Naive thymus-derived CD4-positive, alpha-beta T cell (primary cell): ENCODE measurements at regions of chr10 and their contacts with region 1.

Region 1: DNA sequence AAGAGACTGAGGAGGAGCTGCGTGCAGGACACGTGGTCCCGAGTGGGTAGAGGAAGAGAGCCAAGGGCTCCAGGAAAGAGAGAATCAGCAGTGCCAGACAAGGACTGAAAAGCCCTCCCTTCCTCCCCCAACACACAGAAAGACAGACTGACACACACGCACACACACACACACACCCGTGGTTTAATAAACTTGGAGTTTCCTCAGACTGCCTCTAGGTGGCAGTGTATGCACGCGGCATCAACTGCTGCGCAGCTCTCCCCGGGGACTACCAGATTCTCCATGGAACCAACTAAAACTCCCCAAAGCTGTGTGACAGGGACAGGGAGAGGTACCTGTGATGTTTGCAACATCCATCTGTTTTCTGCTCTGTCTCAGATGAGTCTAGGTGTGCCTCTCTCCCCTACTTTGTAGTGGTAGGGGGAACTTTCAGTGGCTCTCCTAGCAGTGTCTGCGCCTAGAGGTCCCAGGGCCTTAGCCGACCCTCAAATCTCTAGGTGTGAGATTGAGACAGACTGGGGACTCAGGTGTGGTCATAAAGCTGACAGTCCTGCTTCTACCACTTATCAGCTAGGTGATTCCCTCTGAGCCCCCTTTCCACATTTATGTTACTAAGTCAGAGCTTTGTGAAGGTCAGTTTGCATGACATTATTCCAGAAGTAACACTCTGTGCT is 9.3 kb upstream of the TSPAN14 start:
- DNase-seq: peak in 7 of 9 donors; percentile 60 to 83 (median 75)
- ATAC-seq: peak; percentile 86
- H3K4me3 ChIP-seq: no peak overlapping the region
- H3K4me3 Mint-ChIP-seq: peak overlapping the region in 9 of 10 donors; percentile 19 to 69 (median 39)
- H3K27ac ChIP-seq: no peak overlapping the region
- H3K27ac Mint-ChIP-seq: peak overlapping the region; percentile 29 to 90 (median 78)
- H3K4me1 ChIP-seq: peaks cover 0 to 39% of the 10 kb centered on the region in 2 donors
- H3K4me1 Mint-ChIP-seq: peaks cover 34 to 71% (median 55%) of the 10 kb centered on the region in 7 donors
- H3K27me3 ChIP-seq: no peaks in the 10 kb centered on the region
- H3K27me3 Mint-ChIP-seq: peaks cover 0 to 11% (median 0%) of the 10 kb centered on the region in 5 donors

Region 2: DNA sequence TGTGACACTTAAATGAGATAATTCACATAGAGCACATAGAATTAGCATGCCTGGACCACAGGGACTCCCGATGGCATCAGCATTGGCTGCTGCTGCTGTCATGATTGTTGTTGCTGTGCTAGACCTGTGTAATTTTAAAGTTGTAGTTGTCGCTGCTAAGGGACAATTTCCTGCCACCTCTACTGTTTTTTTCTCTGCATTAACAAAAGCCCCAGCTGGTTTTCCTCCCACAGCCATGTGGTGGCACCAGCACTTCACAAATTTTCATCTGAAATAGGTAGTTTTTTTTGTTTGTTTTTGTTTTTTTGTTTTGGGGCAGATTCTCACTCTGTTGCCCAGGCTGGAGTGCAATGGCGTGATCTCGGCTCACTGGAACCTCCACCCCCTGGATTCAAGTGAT is 61.8 kb before region 1 on chr10:
- CTCF ChIA-PET with region 1: interaction called, 6 read pairs
- POLR2A ChIA-PET with region 1: interaction called, 4 read pairs
- intact Hi-C with region 1: loop called (anchors 1 kb)
- DNase-seq: peak in 8 of 9 donors; percentile 34 to 79 (median 63)
- ATAC-seq: peak; percentile 65
- H3K4me3 ChIP-seq: no peak overlapping the region
- H3K4me3 Mint-ChIP-seq: peak overlapping the region in 5 of 10 donors; percentile 10 to 53 (median 45)
- H3K27ac ChIP-seq: no peak overlapping the region
- H3K27ac Mint-ChIP-seq: peak overlapping the region in 8 of 9 donors; percentile 14 to 85 (median 74)
- H3K4me1 ChIP-seq: peaks cover 0 to 16% of the 10 kb centered on the region in 2 donors
- H3K4me1 Mint-ChIP-seq: peaks cover 10 to 24% (median 19%) of the 10 kb centered on the region in 7 donors
- H3K27me3 ChIP-seq: no peaks in the 10 kb centered on the region
- H3K27me3 Mint-ChIP-seq: peaks cover 0 to 8% (median 0%) of the 10 kb centered on the region in 5 donors

Region 3: DNA sequence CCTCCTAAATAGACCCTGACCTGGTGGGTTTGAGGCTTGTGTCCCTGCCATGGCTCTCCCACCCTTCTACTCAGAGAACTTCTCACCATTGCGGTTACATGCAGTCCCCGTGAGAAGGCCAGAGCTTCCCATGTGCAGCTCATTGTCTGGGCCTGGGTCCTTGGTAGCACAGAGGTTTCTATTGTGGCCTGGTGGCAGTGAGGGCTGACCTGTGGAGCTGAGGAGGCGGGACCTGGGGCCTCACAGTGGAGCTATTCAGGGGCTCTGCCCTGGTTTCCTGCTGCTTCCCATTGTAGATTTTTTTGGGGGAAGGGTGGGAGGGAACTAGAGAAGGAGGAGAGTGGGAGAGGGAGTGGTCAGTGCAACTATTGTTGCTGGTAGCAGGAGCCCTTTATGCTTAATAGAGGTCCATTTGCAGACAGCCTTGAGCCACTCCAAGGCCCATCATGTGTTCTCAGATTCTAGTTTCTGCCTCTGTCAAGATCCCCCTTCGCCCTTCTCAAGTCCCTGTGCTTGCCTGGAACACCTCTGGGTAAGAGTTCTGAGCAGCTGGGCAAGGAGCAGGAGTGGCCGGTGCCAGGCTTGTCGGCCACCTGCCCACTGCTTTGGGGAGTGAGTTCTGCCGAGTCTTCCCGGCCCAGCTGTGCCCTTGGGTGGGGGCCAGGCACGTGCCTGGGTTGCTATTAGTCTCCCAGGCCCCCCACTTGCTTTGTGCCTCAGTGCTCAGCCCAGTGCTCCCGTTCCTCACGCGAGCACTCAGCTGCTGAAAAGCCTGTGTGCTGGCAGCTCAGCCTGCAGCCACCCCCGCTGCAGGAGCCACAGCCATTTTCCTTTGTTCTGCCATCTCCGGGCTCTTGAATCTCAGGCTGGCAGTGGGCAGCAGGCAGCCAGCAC is 20.0 kb after region 1 on chr10:
- CTCF ChIA-PET with region 1: interaction called, 63 read pairs
- POLR2A ChIA-PET with region 1: interaction called, 318 read pairs
- intact Hi-C with region 1: loop called in 1 of 2 experiments (anchors 1 kb)
- DNase-seq: peak in 2 of 9 donors; percentile 46 to 47
- ATAC-seq: peak; percentile 11
- H3K4me3 ChIP-seq: peak overlapping the region; percentile 57
- H3K4me3 Mint-ChIP-seq: peak overlapping the region; percentile 79 to 99 (median 88)
- H3K27ac ChIP-seq: peak overlapping the region; percentile 84
- H3K27ac Mint-ChIP-seq: peak overlapping the region; percentile 87 to 99 (median 98)
- H3K4me1 ChIP-seq: peaks cover 88 to 97% of the 10 kb centered on the region in 2 donors
- H3K4me1 Mint-ChIP-seq: peaks cover 75 to 100% (median 95%) of the 10 kb centered on the region in 7 donors
- H3K27me3 ChIP-seq: no peaks in the 10 kb centered on the region
- H3K27me3 Mint-ChIP-seq: no peaks in the 10 kb centered on the region

Region 4: GRCh38 chr10:80498833-80499741 is 54.3 kb after region 1 on chr10:
- CTCF ChIA-PET with region 1: interaction called, 839 read pairs
- POLR2A ChIA-PET with region 1: interaction called, 582 read pairs
- intact Hi-C with region 1: no loop called
- DNase-seq: peak in 2 of 9 donors; percentile 32 to 61
- ATAC-seq: peak; percentile 73
- H3K4me3 ChIP-seq: peak overlapping the region; percentile 33
- H3K4me3 Mint-ChIP-seq: peak overlapping the region; percentile 76 to 92 (median 82)
- H3K27ac ChIP-seq: peak overlapping the region; percentile 59
- H3K27ac Mint-ChIP-seq: peak overlapping the region; percentile 85 to 99 (median 90)
- H3K4me1 ChIP-seq: peaks cover 93 to 99% of the 10 kb centered on the region in 2 donors
- H3K4me1 Mint-ChIP-seq: peaks cover 89 to 100% (median 98%) of the 10 kb centered on the region in 7 donors
- H3K27me3 ChIP-seq: no peaks in the 10 kb centered on the region
- H3K27me3 Mint-ChIP-seq: no peaks in the 10 kb centered on the region

Region 5: GRCh38 chr10:80583685-80584084 is 138.9 kb after region 1 on chr10:
- CTCF ChIA-PET with region 1: interaction called, 5 read pairs
- POLR2A ChIA-PET with region 1: no interaction called
- intact Hi-C with region 1: loop called in 1 of 2 experiments (anchors 1 kb)
- DNase-seq: peak in 1 of 9 donors; percentile 23
- ATAC-seq: no peak
- H3K4me3 ChIP-seq: no peak overlapping the region
- H3K4me3 Mint-ChIP-seq: no peak overlapping the region
- H3K27ac ChIP-seq: no peak overlapping the region
- H3K27ac Mint-ChIP-seq: no peak overlapping the region
- H3K4me1 ChIP-seq: no peaks in the 10 kb centered on the region
- H3K4me1 Mint-ChIP-seq: peaks cover 0 to 10% (median 3%) of the 10 kb centered on the region in 7 donors
- H3K27me3 ChIP-seq: no peaks in the 10 kb centered on the region
- H3K27me3 Mint-ChIP-seq: peaks cover 0 to 13% (median 0%) of the 10 kb centered on the region in 5 donors

Region 6: DNA sequence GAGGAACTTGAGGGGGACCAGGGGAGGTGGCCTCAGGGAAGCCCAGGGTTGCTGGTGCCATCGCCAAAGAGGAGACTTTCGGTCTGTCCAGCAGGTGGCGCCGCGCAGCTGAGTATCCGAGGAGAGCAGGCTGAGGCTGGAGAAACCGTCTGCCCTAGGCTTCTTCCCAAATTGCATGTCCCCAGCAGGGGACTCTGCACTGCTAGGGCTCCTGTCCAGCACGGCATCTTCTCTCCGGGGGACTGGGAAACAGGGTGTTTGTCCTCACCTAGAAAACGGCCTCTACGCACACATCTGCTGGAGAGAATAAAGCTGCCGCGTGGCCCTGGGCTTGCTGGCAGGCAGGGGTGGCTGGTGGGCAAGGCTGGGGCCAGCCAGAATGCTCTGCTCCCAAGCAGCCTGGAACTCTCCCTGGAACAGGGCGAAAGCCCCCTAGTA is 254.8 kb after region 1 on chr10:
- CTCF ChIA-PET with region 1: no interaction called
- POLR2A ChIA-PET with region 1: no interaction called
- intact Hi-C with region 1: loop called (anchors 2 to 10 kb)
- DNase-seq: peak; percentile 14 to 68 (median 54)
- ATAC-seq: peak; percentile 78
- H3K4me3 ChIP-seq: no peak overlapping the region
- H3K4me3 Mint-ChIP-seq: no peak overlapping the region
- H3K27ac ChIP-seq: no peak overlapping the region
- H3K27ac Mint-ChIP-seq: no peak overlapping the region
- H3K4me1 ChIP-seq: no peaks in the 10 kb centered on the region
- H3K4me1 Mint-ChIP-seq: no peaks in the 10 kb centered on the region
- H3K27me3 ChIP-seq: no peaks in the 10 kb centered on the region
- H3K27me3 Mint-ChIP-seq: peaks cover 0 to 14% (median 4%) of the 10 kb centered on the region in 5 donors